B cell (primary cell): ENCODE measurements at regions of chr17 and their contacts with region 1.

Region 1: DNA sequence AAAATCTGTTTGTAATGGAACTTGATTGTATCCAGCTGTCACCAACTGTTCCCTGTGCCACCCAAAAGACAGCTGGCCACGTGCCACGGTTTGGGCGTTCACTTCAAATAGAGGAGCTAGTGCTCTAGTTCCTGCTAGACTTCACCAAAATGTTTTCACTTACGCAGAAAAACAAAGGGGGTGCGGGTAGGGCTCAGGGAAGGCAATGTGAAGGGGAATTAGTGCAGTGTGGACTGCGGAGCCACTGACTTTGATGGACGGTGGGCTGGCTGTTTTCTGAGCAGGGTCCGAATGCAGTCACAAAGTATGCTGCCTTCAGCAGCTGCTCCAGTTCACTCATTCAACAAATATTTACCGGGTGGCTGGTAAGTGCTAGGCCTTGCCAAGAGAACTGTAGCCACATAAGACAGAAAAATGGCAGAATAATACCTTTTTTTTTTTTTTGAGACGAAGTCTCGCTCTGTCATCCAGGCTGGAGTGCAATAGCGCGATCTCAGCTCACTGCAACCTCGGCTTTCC is 7.6 kb upstream of the CYTH1 start:
- DNase-seq: no peak
- ATAC-seq: no peak
- H3K4me3 ChIP-seq: no peak overlapping the region
- H3K4me3 Mint-ChIP-seq: no peak overlapping the region
- H3K27ac ChIP-seq: no peak overlapping the region
- H3K27ac Mint-ChIP-seq: peak overlapping the region; percentile 66
- H3K4me1 ChIP-seq: peaks cover 0 to 10% of the 10 kb centered on the region in 2 donors
- H3K4me1 Mint-ChIP-seq: peaks cover 6% of the 10 kb centered on the region
- H3K27me3 ChIP-seq: no peaks in the 10 kb centered on the region
- H3K27me3 Mint-ChIP-seq: no peaks in the 10 kb centered on the region
- CTCF ChIP-seq: no peak

Region 2: DNA sequence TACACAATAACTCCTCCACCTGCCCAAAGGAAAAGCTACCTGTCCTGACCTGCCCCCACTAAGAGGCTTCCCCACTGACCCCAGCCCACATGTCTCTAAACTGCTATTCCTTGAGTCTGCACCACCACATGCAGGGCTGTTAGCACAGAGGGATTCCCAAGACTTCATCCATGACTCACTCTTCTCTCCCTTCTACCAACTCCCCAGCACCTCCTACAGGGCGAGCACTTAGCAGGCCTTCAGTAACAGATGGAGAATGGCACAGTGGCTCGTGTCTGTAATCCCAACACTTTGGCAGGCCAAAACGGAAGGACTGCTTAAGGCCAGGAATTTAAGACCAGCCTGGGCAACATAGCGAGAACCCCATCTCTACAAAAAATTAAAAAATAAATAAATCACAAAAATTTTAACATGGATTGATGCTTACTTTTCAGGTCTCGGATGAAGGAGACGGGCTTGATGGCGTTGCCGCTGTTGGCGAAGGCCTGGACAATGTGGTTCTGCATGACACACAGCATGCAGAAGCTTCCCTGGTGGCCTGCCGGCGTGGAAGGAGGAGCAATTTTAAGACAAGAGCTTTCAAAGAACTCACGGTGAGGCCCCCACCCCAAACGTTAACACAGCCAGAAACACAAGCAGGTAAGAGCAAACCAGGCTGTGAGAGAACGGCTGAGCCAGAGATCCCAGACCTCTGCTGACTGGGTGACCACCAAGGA is 38.9 kb after region 1 on chr17:
- CTCF ChIA-PET with region 1: no interaction called
- POLR2A ChIA-PET with region 1: no interaction called
- intact Hi-C with region 1: loop called (anchors 5 kb)
- DNase-seq: no peak
- ATAC-seq: no peak
- H3K4me3 ChIP-seq: no peak overlapping the region
- H3K4me3 Mint-ChIP-seq: no peak overlapping the region
- H3K27ac ChIP-seq: no peak overlapping the region
- H3K27ac Mint-ChIP-seq: no peak overlapping the region
- H3K4me1 ChIP-seq: no peaks in the 10 kb centered on the region
- H3K4me1 Mint-ChIP-seq: peaks cover 7% of the 10 kb centered on the region
- H3K27me3 ChIP-seq: no peaks in the 10 kb centered on the region
- H3K27me3 Mint-ChIP-seq: no peaks in the 10 kb centered on the region
- CTCF ChIP-seq: no peak